OCI-LY7 (cell line): ENCODE measurements at regions of chr4 and their contacts with region 1.

Region 1: DNA sequence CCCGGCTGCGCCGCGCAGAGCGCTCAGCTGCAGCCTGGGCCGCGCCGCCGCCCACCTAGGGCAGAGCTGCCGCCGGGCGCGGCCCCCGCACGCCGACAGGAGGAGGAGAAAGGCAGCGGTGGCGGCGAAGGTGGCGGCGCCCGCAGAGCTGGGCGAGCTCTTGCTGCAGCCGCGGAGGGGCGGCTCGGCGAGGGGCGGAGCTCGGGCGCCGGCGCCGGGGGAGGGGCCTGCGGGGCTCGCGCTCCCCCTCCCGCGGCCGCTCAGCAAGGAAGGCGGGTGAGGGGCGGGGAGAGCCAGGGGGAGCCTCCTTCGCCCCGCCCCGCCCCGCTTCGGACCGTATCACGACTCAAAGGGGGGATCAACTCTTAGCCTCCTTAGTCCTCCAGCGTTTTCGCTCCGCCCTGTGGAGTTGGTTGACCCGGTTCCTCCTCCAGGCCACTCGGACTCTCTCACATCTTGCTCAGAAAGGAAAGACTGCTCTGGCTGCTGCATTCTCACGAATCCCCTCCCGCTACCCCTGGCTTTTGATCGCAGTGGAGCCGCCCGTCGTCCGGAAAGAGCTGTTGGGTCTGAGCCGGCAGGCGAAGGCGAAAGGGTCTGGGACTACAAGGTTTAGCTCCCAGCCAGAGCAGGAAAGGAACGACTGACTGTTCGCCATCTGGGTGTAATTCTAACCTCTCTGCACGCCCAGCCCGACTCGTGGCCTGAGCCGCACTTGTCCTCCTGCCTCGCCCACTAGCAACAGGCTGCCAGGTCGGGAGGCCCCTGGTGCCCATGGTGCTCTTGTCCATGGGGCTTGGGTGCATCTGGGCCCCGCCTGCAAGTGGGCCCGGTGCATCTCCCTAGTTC is at the start of gene ATP8A1:
- DNase-seq: peak; percentile 95
- H3K4me3 ChIP-seq: peak within 1 kb of the TSS; percentile 98
- H3K27ac ChIP-seq: peak within 1 kb of the TSS; percentile 75
- H3K4me1 ChIP-seq: peaks cover 32% of the 10 kb centered on the region
- CTCF ChIP-seq: no peak
- total RNA-seq, gene ATP8A1: 76.7 and 80.0 TPM in 2 replicates

Region 2: DNA sequence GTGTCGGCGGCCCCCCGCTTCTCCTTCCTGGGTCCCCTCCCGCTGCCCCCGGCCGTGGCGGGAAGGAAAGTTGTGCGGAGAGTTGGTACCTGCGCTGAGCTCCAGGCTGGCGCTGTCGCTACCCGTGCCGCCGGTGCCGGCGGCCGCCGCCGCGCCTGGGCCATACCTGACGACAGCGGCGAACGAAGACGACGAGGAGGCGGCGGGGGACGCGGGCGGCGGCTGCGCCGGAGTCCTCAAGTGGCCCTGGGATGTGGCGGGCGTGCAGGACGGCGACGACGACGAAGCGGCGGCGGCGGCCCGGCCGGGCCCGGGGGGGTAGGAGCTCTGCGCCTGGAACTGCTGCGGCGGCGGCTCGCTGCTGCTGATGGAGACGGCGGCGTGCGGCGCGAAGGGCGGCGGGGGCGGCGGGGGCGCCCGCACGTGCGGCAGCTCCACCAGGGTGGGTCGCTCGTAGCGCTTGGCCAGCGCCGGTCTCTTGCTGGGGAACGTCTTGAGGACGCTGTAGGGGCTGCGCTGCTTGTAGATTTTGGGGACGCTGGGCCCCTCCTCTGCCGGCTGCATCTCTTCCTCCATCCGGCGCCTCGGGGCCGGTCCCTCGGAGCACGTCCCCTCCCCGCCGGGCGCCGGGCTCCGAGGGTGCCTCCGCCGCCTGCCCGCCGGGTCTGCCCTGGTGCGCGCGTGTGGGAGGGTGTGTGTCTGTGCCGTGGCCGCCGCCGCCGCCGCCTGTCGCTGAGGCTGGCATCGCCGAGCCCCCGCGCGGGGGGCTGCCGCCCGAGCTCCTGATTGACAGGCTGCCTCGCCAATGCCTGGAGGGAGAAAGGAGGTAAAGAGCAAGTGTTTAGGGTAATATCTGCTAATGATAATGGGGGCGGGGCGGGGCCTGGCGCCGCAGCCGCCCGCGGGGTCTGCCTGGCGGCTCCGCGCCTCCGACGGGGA is 505.3 kb before region 1 on chr4:
- CTCF ChIA-PET with region 1: no interaction called
- POLR2A ChIA-PET with region 1: no interaction called
- intact Hi-C with region 1: loop called (anchors 10 kb)
- DNase-seq: peak; percentile 91
- H3K4me3 ChIP-seq: peak overlapping the region; percentile 82
- H3K27ac ChIP-seq: peak overlapping the region; percentile 63
- H3K4me1 ChIP-seq: peaks cover 50% of the 10 kb centered on the region
- CTCF ChIP-seq: no peak

Region 3: DNA sequence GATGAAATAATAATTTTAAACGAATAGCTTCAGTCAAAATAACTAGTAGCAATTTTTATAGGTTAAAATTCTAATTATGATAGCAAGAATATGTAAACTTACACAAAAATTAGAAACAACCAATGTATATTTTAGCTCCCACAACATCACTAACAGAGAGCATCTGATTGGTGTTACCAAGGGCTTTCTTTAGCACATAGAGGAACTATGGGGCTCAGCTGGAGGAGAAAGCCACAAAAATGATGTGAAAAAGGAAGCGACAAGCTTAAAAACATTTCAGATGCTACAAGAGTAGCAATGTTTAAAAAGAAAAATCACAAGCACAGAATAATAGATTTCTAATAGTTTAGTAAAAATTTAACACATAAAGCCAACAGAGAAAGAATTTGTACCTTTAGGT is 56.6 kb before region 1 on chr4:
- CTCF ChIA-PET with region 1: no interaction called
- POLR2A ChIA-PET with region 1: interaction called, 5 read pairs
- intact Hi-C with region 1: loop called (anchors 2 kb)
- DNase-seq: peak; percentile 24
- H3K4me3 ChIP-seq: no peak overlapping the region
- H3K27ac ChIP-seq: no peak overlapping the region
- H3K4me1 ChIP-seq: peaks cover 9% of the 10 kb centered on the region
- CTCF ChIP-seq: no peak

Region 4: GRCh38 chr4:42638993-42639392 is 18.2 kb before region 1 on chr4:
- CTCF ChIA-PET with region 1: interaction called, 9 read pairs
- POLR2A ChIA-PET with region 1: interaction called, 132 read pairs
- intact Hi-C with region 1: loop called (anchors 1 kb)
- DNase-seq: peak; percentile 87
- H3K4me3 ChIP-seq: peak overlapping the region; percentile 65
- H3K27ac ChIP-seq: peak overlapping the region; percentile 99
- H3K4me1 ChIP-seq: peaks cover 97% of the 10 kb centered on the region
- CTCF ChIP-seq: no peak

Region 5: DNA sequence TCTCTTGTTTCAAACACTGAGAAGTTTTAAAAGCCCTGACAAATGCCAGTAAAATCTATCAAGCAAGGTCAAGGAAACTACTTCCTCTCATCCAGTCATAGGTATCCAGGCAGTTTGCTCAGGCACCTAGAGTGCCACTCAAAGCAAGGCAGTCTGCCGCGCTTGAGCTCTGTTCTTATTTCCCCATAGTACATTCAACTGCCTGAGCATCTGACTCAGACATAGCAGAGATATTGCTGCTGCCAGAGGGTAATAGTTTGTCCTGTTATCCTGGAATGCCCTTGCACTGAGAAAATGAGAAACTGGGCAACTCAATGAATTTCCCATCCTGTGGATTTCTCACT is 15.9 kb after region 1 on chr4:
- CTCF ChIA-PET with region 1: interaction called, 5 read pairs
- POLR2A ChIA-PET with region 1: interaction called, 51 read pairs
- intact Hi-C with region 1: no loop called
- DNase-seq: peak; percentile 42
- H3K4me3 ChIP-seq: no peak overlapping the region
- H3K27ac ChIP-seq: no peak overlapping the region
- H3K4me1 ChIP-seq: peaks cover 34% of the 10 kb centered on the region
- CTCF ChIP-seq: no peak

Region 6: GRCh38 chr4:42768125-42768748 is 111.1 kb after region 1 on chr4:
- CTCF ChIA-PET with region 1: no interaction called
- POLR2A ChIA-PET with region 1: no interaction called
- intact Hi-C with region 1: loop called (anchors 5 kb)
- DNase-seq: peak; percentile 52
- H3K4me3 ChIP-seq: no peak overlapping the region
- H3K27ac ChIP-seq: no peak overlapping the region
- H3K4me1 ChIP-seq: no peaks in the 10 kb centered on the region
- CTCF ChIP-seq: peak; percentile 83

Region 7: DNA sequence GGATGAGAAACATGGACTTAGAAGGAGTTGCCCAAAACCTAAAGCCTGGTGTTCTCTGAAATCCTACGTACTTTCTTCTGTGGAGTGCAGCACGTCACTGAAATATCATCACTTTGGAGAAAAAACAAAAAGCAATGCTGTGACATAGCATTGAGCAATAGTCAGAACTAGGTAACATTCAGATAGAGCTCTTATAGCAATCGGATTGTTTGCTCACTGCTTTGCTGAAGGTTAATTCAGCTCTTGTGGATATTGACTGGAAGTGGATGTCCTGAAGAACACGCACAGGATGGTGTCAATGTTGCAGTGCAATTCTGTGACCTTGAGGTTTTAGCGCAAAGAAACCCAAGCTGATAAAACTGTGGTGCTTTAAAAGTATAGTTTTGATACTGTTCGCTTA is 121.2 kb after region 1 on chr4:
- CTCF ChIA-PET with region 1: no interaction called
- POLR2A ChIA-PET with region 1: no interaction called
- intact Hi-C with region 1: no loop called
- DNase-seq: no peak
- H3K4me3 ChIP-seq: no peak overlapping the region
- H3K27ac ChIP-seq: no peak overlapping the region
- H3K4me1 ChIP-seq: no peaks in the 10 kb centered on the region
- CTCF ChIP-seq: no peak